ENCODE measurements at regions of chr17 and their contacts with region 1.

Region 1: DNA sequence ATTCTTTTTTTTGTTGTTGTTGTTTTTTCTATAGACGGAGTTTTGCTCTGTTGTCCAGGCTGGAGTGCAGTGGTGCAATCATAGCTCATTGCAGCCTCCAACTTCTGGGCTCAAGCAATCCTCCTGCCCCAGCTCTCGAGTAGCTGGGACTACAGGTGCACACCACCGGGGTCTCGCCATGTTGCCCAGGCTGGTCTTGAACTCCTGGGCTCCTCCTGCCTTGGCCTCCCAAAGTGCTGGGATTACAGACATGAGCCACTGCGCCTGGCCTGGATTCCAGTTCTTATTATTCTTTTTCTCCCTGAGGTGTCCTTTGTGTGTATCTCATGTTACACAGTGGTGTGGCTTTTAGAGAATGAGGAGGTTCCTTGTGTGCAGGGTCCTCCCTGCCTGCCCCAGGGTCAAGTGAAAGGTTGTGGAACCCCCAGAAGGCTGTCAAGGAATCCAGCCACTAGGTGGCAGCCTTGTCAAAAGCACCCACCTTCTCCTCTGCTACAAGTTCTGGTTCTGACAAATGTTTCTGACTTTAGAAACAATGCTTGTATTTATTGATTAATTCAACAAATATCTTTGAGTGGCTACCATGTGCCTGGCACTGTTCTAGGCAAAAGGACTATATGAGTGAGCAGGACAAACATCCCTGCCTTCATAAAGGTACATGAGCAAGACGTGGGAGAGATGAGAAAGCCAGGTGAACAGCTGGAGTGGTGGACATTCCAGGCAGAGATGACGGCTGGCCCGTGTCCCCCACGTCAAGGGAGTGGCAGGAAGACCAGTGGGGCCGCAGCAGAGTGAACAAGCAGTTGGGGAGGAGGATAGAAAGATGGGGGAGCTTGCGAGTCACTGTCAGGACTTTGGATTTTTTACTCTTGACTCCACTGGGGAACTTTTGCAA is 112.4 kb downstream of the SPECC1 start:
- DNase-seq: peak; percentile 59 to 84 (median 72)
- ATAC-seq: peak; percentile 78 to 82
- H3K4me3 ChIP-seq: no peak overlapping the region
- H3K27ac ChIP-seq: no peak overlapping the region
- H3K4me1 ChIP-seq: no peaks in the 10 kb centered on the region
- H3K27me3 ChIP-seq: no peaks in the 10 kb centered on the region

Region 2: GRCh38 chr17:19992803-19993713 is 128.5 kb before region 1 on chr17:
- intact Hi-C with region 1: loop called (anchors 2 to 5 kb)
- DNase-seq: peak; percentile 88 to 96 (median 93)
- ATAC-seq: peak; percentile 97 to 98
- H3K4me3 ChIP-seq: no peak overlapping the region
- H3K27ac ChIP-seq: no peak overlapping the region
- H3K4me1 ChIP-seq: no peaks in the 10 kb centered on the region
- H3K27me3 ChIP-seq: no peaks in the 10 kb centered on the region

Region 3: DNA sequence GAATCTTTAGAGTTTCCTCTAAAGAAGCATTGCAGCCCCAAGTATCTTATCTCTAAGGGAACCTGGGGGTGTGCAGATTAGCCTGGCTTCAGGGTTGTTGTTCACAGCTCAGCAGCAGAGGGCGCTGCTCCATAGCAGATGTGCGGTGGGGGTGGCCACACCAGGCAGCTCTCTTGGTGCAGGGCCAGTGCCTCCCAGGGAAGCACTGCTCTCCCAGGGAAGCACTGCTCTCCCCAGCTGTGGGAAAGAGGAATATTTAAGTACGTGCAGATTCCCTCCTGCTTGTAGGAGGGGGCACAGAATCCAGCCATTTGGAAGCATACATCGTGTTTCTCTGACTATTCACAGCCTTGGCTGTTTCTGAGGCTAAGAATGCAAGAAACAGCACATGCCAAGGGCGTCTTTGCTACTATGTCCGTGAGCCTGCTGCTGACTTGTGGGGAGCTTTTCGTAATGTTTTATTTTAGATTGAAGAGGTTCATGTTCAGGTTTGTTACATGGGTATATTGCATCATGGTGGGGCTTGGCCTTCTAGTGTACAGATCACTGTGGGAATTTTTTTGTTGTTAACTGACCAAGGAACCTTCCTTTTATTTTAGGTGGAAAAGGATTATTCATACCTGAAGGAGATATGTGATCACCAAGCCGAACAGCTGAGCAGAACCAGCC is 105.3 kb after region 1 on chr17:
- intact Hi-C with region 1: loop called in 1 of 4 experiments (anchors 10 kb)
- DNase-seq: peak; percentile 82 to 95 (median 93)
- ATAC-seq: peak; percentile 97 to 98
- H3K4me3 ChIP-seq: no peak overlapping the region
- H3K27ac ChIP-seq: no peak overlapping the region
- H3K4me1 ChIP-seq: no peaks in the 10 kb centered on the region
- H3K27me3 ChIP-seq: no peaks in the 10 kb centered on the region

Region 4: DNA sequence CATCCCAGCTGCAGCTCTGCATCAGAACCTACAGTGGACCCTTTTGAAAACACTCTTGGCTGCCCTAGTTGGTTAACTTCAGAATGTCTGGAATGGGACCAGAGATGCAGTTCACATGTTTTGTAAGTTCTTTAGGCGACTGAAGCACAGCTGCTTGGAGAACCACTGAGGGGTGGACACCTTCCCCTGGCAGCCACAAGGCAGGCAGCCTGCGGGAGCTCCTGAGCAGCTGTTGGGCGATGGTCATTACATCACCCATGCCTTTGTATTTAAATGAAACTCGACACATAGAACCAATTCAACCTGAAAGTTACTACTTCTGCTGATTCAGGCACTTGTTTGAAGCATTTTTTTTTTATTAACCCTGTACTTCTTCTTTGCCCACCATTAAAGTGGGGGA is 194.2 kb after region 1 on chr17:
- intact Hi-C with region 1: loop called in 2 of 4 experiments (anchors 2 to 5 kb)
- DNase-seq: no peak
- ATAC-seq: no peak
- H3K4me3 ChIP-seq: no peak overlapping the region
- H3K27ac ChIP-seq: no peak overlapping the region
- H3K4me1 ChIP-seq: no peaks in the 10 kb centered on the region
- H3K27me3 ChIP-seq: no peaks in the 10 kb centered on the region

Measured in right cardiac atrium (tissue), 5 donors.